CD4-positive, alpha-beta T cell (primary cell): ENCODE measurements at regions of chr2 and their contacts with region 1.

Region 1: GRCh38 chr2:28821295-28821958 is 10.8 kb downstream of the SPDYA start:
- DNase-seq: peak in 13 of 14 experiments; percentile 18 to 84 (median 44)
- ATAC-seq: peak; percentile 94
- H3K4me3 ChIP-seq: no peak overlapping the region
- H3K4me3 Mint-ChIP-seq: no peak overlapping the region
- H3K27ac ChIP-seq: no peak overlapping the region
- H3K27ac Mint-ChIP-seq: no peak overlapping the region
- H3K4me1 ChIP-seq: no peaks in the 10 kb centered on the region
- H3K4me1 Mint-ChIP-seq: no peaks in the 10 kb centered on the region
- H3K27me3 ChIP-seq: no peaks in the 10 kb centered on the region
- H3K27me3 Mint-ChIP-seq: no peaks in the 10 kb centered on the region
- CTCF ChIP-seq: peak; percentile 75

Region 2: GRCh38 chr2:28894470-28895177 is 73.2 kb after region 1 on chr2 and contains the start of gene WDR43:
- CTCF ChIA-PET with region 1: interaction called, 3 read pairs
- POLR2A ChIA-PET with region 1: interaction called, 4 read pairs
- intact Hi-C with region 1: loop called (anchors 1 to 5 kb)
- DNase-seq: peak; percentile 90 to 99 (median 97)
- ATAC-seq: peak; percentile 97
- H3K4me3 ChIP-seq: peak within 1 kb of the TSS; percentile 89
- H3K4me3 Mint-ChIP-seq: peak within 1 kb of the TSS; percentile 97
- H3K27ac ChIP-seq: peak within 1 kb of the TSS; percentile 55 to 59
- H3K27ac Mint-ChIP-seq: peak within 1 kb of the TSS; percentile 91
- H3K4me1 ChIP-seq: peaks cover 24% of the 10 kb centered on the region
- H3K4me1 Mint-ChIP-seq: peaks cover 49% of the 10 kb centered on the region
- H3K27me3 ChIP-seq: no peaks in the 10 kb centered on the region
- H3K27me3 Mint-ChIP-seq: no peaks in the 10 kb centered on the region
- CTCF ChIP-seq: no peak
- total RNA-seq, gene WDR43: 62.4 to 73.2 TPM

Region 3: DNA sequence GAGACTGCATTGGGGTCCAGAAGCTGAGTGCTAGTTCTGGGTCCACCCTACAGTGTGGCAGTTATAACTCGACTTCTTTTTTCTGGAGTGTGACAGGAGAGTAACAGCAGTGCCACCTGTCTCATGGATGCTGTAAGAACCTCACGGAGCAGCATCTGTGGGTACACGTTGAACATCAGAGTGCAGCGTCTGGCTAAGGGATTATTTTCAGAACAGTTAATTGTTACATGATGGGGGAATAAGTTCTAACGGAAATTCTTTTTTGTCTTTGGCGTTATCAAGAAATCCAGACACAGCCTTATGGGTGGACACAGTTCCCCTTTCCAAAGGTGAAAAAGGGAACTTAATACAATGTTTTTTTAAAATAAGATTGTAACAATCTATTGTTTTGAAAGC is 131.4 kb after region 1 on chr2:
- CTCF ChIA-PET with region 1: no interaction called
- POLR2A ChIA-PET with region 1: no interaction called
- intact Hi-C with region 1: loop called (anchors 2 to 5 kb)
- DNase-seq: no peak
- ATAC-seq: peak; percentile 43
- H3K4me3 ChIP-seq: no peak overlapping the region
- H3K4me3 Mint-ChIP-seq: no peak overlapping the region
- H3K27ac ChIP-seq: no peak overlapping the region
- H3K27ac Mint-ChIP-seq: no peak overlapping the region
- H3K4me1 ChIP-seq: peaks cover 3% of the 10 kb centered on the region
- H3K4me1 Mint-ChIP-seq: no peaks in the 10 kb centered on the region
- H3K27me3 ChIP-seq: no peaks in the 10 kb centered on the region
- H3K27me3 Mint-ChIP-seq: no peaks in the 10 kb centered on the region
- CTCF ChIP-seq: no peak

Region 4: DNA sequence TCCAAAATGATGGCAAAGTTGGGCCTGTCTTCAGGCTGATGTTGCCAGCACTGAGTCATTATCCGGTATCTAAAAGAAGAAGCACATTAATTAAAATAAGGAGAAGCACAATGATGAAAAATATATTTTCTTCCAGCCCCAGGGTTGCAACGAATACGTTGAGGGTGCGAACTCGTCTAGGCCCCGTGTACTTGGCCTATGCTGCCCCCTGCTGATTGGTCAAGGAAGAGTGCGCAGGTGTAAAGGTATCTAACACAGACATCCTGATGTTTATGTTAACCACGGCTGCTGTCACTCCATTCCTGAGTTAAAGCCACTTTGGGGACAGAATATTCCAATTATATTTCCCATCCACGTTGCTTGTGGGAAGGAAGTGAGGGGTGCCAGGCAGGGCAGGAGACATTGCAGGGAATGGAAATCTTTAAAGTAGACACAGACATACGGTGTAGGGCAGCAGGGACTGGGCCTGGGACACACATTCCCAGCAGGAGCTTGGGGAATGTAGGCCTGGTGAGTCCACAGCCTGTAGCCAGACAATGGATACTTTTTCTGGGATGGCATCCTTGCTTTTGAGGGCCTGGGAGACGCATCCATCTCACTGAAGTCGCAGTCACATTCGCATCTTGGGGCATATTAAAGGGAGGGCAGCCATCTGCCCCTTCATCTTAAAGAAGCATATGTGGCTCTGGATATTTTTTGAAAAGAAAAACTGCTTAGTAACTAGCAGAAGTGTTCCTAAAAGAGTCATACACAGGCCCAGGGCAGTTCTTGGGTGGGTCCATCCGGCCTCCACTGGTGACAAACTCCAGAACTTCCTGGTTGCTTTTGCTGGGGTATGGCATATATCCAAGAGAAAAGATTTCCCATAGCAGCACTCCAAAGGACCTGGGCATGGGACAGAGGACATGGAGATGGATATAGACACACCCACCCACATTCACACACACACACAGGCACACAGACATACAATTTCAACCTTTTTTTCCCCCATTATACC is 375.7 kb after region 1 on chr2:
- CTCF ChIA-PET with region 1: no interaction called
- POLR2A ChIA-PET with region 1: no interaction called
- intact Hi-C with region 1: loop called (anchors 1 kb)
- DNase-seq: peak; percentile 64 to 85 (median 73)
- ATAC-seq: peak; percentile 97
- H3K4me3 ChIP-seq: no peak overlapping the region
- H3K4me3 Mint-ChIP-seq: no peak overlapping the region
- H3K27ac ChIP-seq: no peak overlapping the region
- H3K27ac Mint-ChIP-seq: no peak overlapping the region
- H3K4me1 ChIP-seq: peaks cover 3% of the 10 kb centered on the region
- H3K4me1 Mint-ChIP-seq: peaks cover 5% of the 10 kb centered on the region
- H3K27me3 ChIP-seq: no peaks in the 10 kb centered on the region
- H3K27me3 Mint-ChIP-seq: no peaks in the 10 kb centered on the region
- CTCF ChIP-seq: peak; percentile 95

Region 5: GRCh38 chr2:30072250-30072842 is 1250.9 kb after region 1 on chr2:
- CTCF ChIA-PET with region 1: no interaction called
- POLR2A ChIA-PET with region 1: no interaction called
- intact Hi-C with region 1: loop called (anchors 5 kb)
- DNase-seq: peak; percentile 17 to 75 (median 46)
- ATAC-seq: peak; percentile 71
- H3K4me3 ChIP-seq: no peak overlapping the region
- H3K4me3 Mint-ChIP-seq: no peak overlapping the region
- H3K27ac ChIP-seq: no peak overlapping the region
- H3K27ac Mint-ChIP-seq: no peak overlapping the region
- H3K4me1 ChIP-seq: peaks cover 3% of the 10 kb centered on the region
- H3K4me1 Mint-ChIP-seq: no peaks in the 10 kb centered on the region
- H3K27me3 ChIP-seq: peaks cover 17 to 21% of the 10 kb centered on the region in 2 experiments
- H3K27me3 Mint-ChIP-seq: peaks cover 45% of the 10 kb centered on the region
- CTCF ChIP-seq: peak; percentile 58